HCT116 (cell line): ENCODE measurements at regions of chr16 and their contacts with region 1.

Region 1: GRCh38 chr16:72124761-72125634 is 31.4 kb downstream of the DHX38 start:
- DNase-seq: peak; percentile 42
- ATAC-seq: peak; percentile 97
- H3K4me3 ChIP-seq: no peak overlapping the region
- H3K27ac ChIP-seq: no peak overlapping the region
- H3K4me1 ChIP-seq: no peaks in the 10 kb centered on the region
- H3K27me3 ChIP-seq: no peaks in the 10 kb centered on the region
- CTCF ChIP-seq: peak; percentile 54 to 80 (median 75); a peak in 5 of 6 replicates
- POLR2A ChIP-seq: no peak
- RAD21 ChIP-seq: peak; percentile 83

Region 2: GRCh38 chr16:72467157-72467759 is 342.3 kb after region 1 on chr16:
- CTCF ChIA-PET with region 1: interaction called, 15 read pairs
- POLR2A ChIA-PET with region 1: no interaction called
- RAD21 ChIA-PET with region 1: no interaction called
- intact Hi-C with region 1: loop called (anchors 2 kb)
- DNase-seq: peak; percentile 28
- ATAC-seq: peak; percentile 78
- H3K4me3 ChIP-seq: no peak overlapping the region
- H3K27ac ChIP-seq: no peak overlapping the region
- H3K4me1 ChIP-seq: no peaks in the 10 kb centered on the region
- H3K27me3 ChIP-seq: no peaks in the 10 kb centered on the region
- CTCF ChIP-seq: peak; percentile 58 to 74 (median 72)
- POLR2A ChIP-seq: no peak
- RAD21 ChIP-seq: peak; percentile 74

Region 3: GRCh38 chr16:72473631-72474030 is 348.6 kb after region 1 on chr16:
- CTCF ChIA-PET with region 1: interaction called, 3 read pairs
- POLR2A ChIA-PET with region 1: no interaction called
- RAD21 ChIA-PET with region 1: no interaction called
- intact Hi-C with region 1: loop called (anchors 2 kb)
- DNase-seq: no peak
- ATAC-seq: no peak
- H3K4me3 ChIP-seq: no peak overlapping the region
- H3K27ac ChIP-seq: no peak overlapping the region
- H3K4me1 ChIP-seq: peaks cover 14 to 22% of the 10 kb centered on the region in 2 experiments
- H3K27me3 ChIP-seq: no peaks in the 10 kb centered on the region
- CTCF ChIP-seq: no peak
- POLR2A ChIP-seq: no peak
- RAD21 ChIP-seq: no peak